ENCODE measurements at regions of chr15 and their contacts with region 1.

Region 1: DNA sequence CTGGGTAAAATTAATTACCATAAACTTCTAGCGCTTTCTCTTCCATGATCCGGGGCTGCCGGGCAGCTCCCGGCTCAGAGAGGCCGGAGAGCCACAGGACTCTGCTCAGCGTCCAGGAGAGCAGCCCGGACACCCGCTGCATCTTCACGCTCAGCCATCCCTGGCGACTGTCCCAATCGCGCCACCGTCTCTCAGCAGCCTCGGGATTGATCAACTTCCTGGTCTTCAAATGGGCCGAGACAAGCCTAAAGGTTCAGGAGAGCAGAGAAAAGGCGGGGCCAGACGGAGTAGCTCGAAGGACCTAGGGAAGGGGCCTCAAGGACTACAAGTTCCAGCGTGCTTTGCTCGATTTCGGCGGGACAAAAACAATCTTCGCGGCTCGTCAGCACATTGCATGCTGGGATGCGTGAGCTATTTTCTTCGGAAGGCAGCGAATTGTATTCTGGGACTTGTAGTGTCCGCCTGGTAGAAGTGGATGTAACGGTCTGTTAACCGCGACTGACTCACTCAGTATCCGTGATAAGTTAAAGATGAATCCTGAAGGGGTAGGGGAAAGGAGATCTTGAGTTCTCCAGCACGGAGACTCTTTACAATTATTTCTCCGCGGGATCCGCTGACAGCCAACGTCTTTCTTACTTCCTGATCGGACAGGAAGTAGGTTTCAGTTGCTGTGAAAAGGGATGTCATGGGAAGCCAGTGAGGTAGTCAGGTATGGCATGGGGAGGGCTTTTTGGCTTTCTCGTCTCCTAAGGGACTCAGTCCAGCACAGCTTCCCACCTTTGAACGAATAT is at the start of gene CIAO2A:
- DNase-seq: peak; percentile 66 to 93 (median 87)
- ATAC-seq: peak; percentile 80
- H3K4me3 ChIP-seq: peak within 1 kb of the TSS; percentile 87
- H3K4me3 Mint-ChIP-seq: peak within 1 kb of the TSS; percentile 92 to 100 (median 98)
- H3K27ac ChIP-seq: peak within 1 kb of the TSS; percentile 88
- H3K27ac Mint-ChIP-seq: peak within 1 kb of the TSS; percentile 98 to 100 (median 99)
- H3K4me1 ChIP-seq: peaks cover 41 to 48% of the 10 kb centered on the region in 2 donors
- H3K4me1 Mint-ChIP-seq: peaks cover 50 to 86% (median 81%) of the 10 kb centered on the region in 7 donors
- H3K27me3 ChIP-seq: no peaks in the 10 kb centered on the region
- H3K27me3 Mint-ChIP-seq: no peaks in the 10 kb centered on the region
- total RNA-seq, gene CIAO2A: 19.2 to 66.8 (median 28.0) TPM

Region 2: DNA sequence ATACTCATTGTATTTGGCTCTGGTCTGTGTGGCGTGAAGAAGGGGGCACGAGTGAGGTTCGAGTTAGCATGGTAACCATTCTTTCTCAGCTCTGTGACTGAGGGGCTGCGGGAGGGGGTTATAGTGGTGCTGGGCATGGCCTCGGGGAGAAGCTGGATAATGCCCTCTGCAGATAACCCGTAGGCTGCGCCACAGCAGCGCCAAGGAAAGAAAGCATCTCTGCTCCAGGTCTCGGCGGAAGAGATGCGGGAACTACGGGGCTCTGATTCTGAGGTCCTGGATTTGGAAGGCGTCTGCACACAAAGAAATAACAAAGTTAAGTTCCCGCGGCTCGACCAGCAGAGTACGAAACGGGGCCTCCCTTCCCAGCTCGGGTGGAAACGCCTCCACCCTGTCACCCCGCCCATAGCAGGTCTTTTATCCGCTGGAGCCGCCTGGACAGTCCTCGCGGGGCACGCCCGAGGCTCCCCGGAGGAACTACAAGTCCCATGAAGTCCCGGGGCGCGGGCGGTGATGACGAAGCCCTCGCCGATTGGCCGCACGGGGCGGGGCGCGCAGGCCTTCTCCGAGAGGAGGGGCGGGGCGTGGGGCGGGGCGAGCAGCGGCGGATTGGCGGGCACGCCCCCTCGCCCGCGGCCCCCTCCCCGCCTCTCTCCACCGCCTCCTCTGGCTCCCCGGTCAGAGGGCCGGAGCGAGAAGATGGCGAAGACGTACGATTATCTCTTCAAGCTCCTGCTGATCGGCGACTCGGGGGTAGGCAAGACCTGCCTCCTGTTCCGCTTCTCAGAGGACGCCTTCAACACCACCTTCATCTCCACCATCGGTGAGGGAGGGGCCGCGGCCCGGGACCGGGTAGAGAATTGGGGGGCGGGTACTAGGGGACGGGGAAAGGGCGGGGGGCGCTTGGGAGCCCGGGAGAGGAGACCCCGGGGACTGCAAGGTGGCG is 904.6 kb before region 1 on chr15 and contains the start of gene RAB8B:
- CTCF ChIA-PET with region 1: no interaction called
- POLR2A ChIA-PET with region 1: no interaction called
- intact Hi-C with region 1: loop called (anchors 1 to 2 kb)
- DNase-seq: peak; percentile 85 to 98 (median 93)
- ATAC-seq: peak; percentile 88
- H3K4me3 ChIP-seq: peak within 1 kb of the TSS; percentile 86
- H3K4me3 Mint-ChIP-seq: peak within 1 kb of the TSS; percentile 92 to 99 (median 97)
- H3K27ac ChIP-seq: peak within 1 kb of the TSS; percentile 99
- H3K27ac Mint-ChIP-seq: peak within 1 kb of the TSS; percentile 84 to 98 (median 95)
- H3K4me1 ChIP-seq: peaks cover 22 to 40% of the 10 kb centered on the region in 2 donors
- H3K4me1 Mint-ChIP-seq: peaks cover 41 to 54% (median 50%) of the 10 kb centered on the region in 7 donors
- H3K27me3 ChIP-seq: no peaks in the 10 kb centered on the region
- H3K27me3 Mint-ChIP-seq: peaks cover 0 to 3% (median 0%) of the 10 kb centered on the region in 5 donors
- total RNA-seq, gene RAB8B: 37.2 to 100 (median 71.3) TPM

Region 3: DNA sequence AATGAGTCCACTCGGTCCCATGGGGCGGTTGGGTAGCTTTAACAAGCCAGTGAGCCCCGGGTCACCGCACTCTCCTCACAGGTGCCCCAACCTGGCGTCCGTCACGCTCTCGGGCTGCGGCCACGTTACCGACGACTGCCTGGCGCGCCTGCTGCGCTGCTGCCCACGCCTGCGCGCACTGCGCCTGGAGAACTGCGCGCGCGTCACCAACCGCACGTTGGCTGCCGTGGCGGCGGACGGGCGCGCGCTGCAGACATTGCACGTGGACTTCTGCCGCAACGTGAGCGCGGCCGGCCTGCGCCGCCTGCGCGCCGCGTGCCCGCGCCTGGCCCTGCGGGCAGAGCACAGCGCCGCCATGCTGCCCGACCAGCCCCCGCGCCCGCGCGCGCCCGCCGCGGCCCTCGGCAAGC is 493.2 kb before region 1 on chr15:
- CTCF ChIA-PET with region 1: no interaction called
- POLR2A ChIA-PET with region 1: interaction called, 5 read pairs
- intact Hi-C with region 1: loop called (anchors 1 kb)
- DNase-seq: peak; percentile 85 to 95 (median 90)
- ATAC-seq: peak; percentile 93
- H3K4me3 ChIP-seq: peak overlapping the region; percentile 95
- H3K4me3 Mint-ChIP-seq: peak overlapping the region; percentile 91 to 99 (median 94)
- H3K27ac ChIP-seq: peak overlapping the region; percentile 80
- H3K27ac Mint-ChIP-seq: peak overlapping the region; percentile 90 to 96 (median 93)
- H3K4me1 ChIP-seq: peaks cover 22 to 27% of the 10 kb centered on the region in 2 donors
- H3K4me1 Mint-ChIP-seq: peaks cover 39 to 70% (median 66%) of the 10 kb centered on the region in 7 donors
- H3K27me3 ChIP-seq: no peaks in the 10 kb centered on the region
- H3K27me3 Mint-ChIP-seq: no peaks in the 10 kb centered on the region

Region 4: GRCh38 chr15:63891079-63891767 is 202.6 kb before region 1 on chr15:
- CTCF ChIA-PET with region 1: no interaction called
- POLR2A ChIA-PET with region 1: no interaction called
- intact Hi-C with region 1: loop called in 1 of 2 experiments (anchors 2 kb)
- DNase-seq: peak; percentile 33 to 77 (median 59)
- ATAC-seq: peak; percentile 60
- H3K4me3 ChIP-seq: no peak overlapping the region
- H3K4me3 Mint-ChIP-seq: peak overlapping the region in 9 of 10 donors; percentile 17 to 82 (median 51)
- H3K27ac ChIP-seq: peak overlapping the region; percentile 54
- H3K27ac Mint-ChIP-seq: peak overlapping the region; percentile 75 to 98 (median 88)
- H3K4me1 ChIP-seq: peaks cover 53% of the 10 kb centered on the region in 2 donors
- H3K4me1 Mint-ChIP-seq: peaks cover 57 to 81% (median 73%) of the 10 kb centered on the region in 7 donors
- H3K27me3 ChIP-seq: no peaks in the 10 kb centered on the region
- H3K27me3 Mint-ChIP-seq: no peaks in the 10 kb centered on the region

Region 5: GRCh38 chr15:64232400-64232799 is 138.6 kb after region 1 on chr15:
- CTCF ChIA-PET with region 1: no interaction called
- POLR2A ChIA-PET with region 1: no interaction called
- intact Hi-C with region 1: no loop called
- DNase-seq: no peak
- ATAC-seq: no peak
- H3K4me3 ChIP-seq: no peak overlapping the region
- H3K4me3 Mint-ChIP-seq: no peak overlapping the region
- H3K27ac ChIP-seq: no peak overlapping the region
- H3K27ac Mint-ChIP-seq: no peak overlapping the region
- H3K4me1 ChIP-seq: no peaks in the 10 kb centered on the region
- H3K4me1 Mint-ChIP-seq: peaks cover 5 to 24% (median 9%) of the 10 kb centered on the region in 7 donors
- H3K27me3 ChIP-seq: no peaks in the 10 kb centered on the region
- H3K27me3 Mint-ChIP-seq: no peaks in the 10 kb centered on the region

Region 6: DNA sequence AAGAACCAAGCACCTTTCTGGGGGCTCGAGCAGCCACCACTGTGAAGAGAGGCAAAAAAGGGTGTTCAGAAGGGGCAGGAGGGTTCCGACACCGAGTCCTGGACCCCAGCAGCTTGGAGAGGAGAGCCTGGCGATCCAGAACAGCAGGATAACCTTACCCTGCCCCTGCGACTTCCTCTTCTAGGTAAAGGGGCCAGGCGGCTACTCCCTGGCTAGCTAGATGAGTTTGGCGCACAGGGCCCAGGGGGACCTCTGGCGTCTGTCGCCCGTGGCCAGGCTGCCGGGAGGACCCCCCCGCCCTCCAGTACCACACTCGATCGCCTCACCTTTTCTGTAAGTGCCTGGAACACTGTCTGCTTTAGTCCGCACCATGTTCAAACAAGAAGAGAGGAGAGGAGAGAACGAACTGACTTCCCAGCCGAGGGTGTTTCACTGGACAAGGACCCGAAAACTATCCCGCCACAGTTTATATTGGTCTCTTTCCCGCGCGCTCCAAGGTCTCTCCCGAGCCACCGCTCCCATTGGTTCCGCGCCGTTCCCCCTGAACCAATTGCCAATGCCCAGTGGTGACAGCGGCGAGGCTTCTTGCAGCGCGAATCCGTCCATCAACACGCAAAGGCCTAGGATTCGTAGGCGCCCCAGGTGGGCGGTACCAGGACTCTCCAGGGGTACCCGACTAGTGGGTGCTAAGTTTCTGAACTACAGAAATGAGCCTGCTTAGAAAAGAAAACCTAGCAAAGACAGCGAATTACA is 287.4 kb after region 1 on chr15 and contains the start of gene PCLAF:
- CTCF ChIA-PET with region 1: no interaction called
- POLR2A ChIA-PET with region 1: no interaction called
- intact Hi-C with region 1: loop called (anchors 2 to 5 kb)
- DNase-seq: peak; percentile 72 to 91 (median 85)
- ATAC-seq: peak; percentile 100
- H3K4me3 ChIP-seq: peak within 1 kb of the TSS; percentile 66
- H3K4me3 Mint-ChIP-seq: peak within 1 kb of the TSS; percentile 79 to 97 (median 94)
- H3K27ac ChIP-seq: peak within 1 kb of the TSS; percentile 57
- H3K27ac Mint-ChIP-seq: peak within 1 kb of the TSS; percentile 11 to 88 (median 60)
- H3K4me1 ChIP-seq: peaks cover 0 to 4% of the 10 kb centered on the region in 2 donors
- H3K4me1 Mint-ChIP-seq: peaks cover 0 to 36% (median 9%) of the 10 kb centered on the region in 7 donors
- H3K27me3 ChIP-seq: no peaks in the 10 kb centered on the region
- H3K27me3 Mint-ChIP-seq: no peaks in the 10 kb centered on the region
- total RNA-seq, gene PCLAF: 0.85 to 58.7 (median 1.2) TPM

Region 7: DNA sequence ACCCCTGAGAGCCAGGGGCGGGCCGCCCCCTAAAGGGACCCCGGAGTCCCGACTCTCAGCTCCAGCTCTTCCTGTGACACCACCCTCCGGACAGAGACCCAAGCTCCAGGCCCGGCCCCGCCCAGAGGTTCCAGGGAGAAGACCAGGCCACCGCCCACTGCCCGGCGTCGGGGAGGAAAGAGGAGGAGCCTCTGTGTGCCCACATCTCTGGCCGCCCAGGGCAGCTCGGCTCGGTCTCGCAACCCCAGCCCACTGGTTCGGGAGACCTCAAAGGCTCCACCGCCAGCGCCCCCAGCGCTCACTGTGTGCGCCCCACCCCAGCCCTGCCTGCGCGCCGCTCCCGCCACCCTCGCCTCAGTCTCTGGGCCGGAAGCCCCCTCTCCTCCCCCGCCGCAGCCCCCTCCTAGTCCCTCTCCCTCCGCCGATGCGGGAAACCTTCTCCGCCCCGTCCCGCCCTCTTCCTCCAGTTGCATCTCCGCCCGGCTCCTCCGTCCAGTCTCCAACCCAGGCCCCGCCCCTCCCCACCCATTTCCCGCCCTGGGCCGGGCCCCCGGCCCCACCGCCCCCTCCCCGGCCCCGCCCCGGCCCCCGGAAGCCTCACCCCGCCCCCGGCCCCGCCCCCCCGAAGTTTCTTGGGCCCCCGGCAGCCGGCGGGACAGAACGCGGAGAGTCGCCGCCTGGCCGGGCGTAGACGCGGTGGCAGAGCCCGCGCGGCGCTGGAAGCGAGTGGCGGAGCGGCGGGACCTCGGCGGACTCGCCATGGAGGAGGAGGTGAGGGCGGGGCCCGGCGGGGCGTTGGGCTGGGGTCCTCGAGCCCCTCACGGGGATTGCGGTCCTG is 747.7 kb after region 1 on chr15 and contains the start of gene PLEKHO2:
- CTCF ChIA-PET with region 1: no interaction called
- POLR2A ChIA-PET with region 1: no interaction called
- intact Hi-C with region 1: loop called in 1 of 2 experiments (anchors 5 kb)
- DNase-seq: peak; percentile 70 to 88 (median 80)
- ATAC-seq: peak; percentile 85
- H3K4me3 ChIP-seq: peak within 1 kb of the TSS; percentile 65
- H3K4me3 Mint-ChIP-seq: peak within 1 kb of the TSS; percentile 85 to 98 (median 96)
- H3K27ac ChIP-seq: peak within 1 kb of the TSS; percentile 81
- H3K27ac Mint-ChIP-seq: peak within 1 kb of the TSS; percentile 83 to 96 (median 91)
- H3K4me1 ChIP-seq: peaks cover 48 to 62% of the 10 kb centered on the region in 2 donors
- H3K4me1 Mint-ChIP-seq: peaks cover 63 to 89% (median 86%) of the 10 kb centered on the region in 7 donors
- H3K27me3 ChIP-seq: no peaks in the 10 kb centered on the region
- H3K27me3 Mint-ChIP-seq: no peaks in the 10 kb centered on the region
- total RNA-seq, gene PLEKHO2: 8.6 to 52.3 (median 14.0) TPM

Region 8: DNA sequence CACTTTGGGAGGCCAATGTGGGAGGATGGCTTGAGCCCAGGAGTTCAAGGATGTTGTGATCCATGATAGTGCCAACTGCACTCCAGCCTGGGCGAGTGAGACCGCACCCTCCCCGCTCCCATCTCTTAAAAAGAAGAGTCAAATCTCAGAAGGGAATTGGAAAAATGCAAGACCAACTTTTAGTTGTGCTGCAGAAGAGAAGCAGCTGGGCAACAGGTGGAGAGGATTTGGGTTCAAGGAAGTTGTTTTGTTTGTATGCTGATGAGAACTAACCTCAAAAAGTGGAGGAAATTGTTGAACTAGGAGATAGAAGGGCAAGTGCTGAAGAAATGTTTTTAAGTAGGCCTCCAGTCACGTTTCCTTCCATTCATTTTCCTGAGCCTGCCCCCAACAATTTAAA is 1052.6 kb after region 1 on chr15:
- CTCF ChIA-PET with region 1: no interaction called
- POLR2A ChIA-PET with region 1: no interaction called
- intact Hi-C with region 1: no loop called
- DNase-seq: no peak
- ATAC-seq: no peak
- H3K4me3 ChIP-seq: no peak overlapping the region
- H3K4me3 Mint-ChIP-seq: no peak overlapping the region
- H3K27ac ChIP-seq: no peak overlapping the region
- H3K27ac Mint-ChIP-seq: peak overlapping the region in 4 of 9 donors; percentile 3 to 80 (median 36)
- H3K4me1 ChIP-seq: no peaks in the 10 kb centered on the region
- H3K4me1 Mint-ChIP-seq: peaks cover 0 to 4% (median 0%) of the 10 kb centered on the region in 7 donors
- H3K27me3 ChIP-seq: no peaks in the 10 kb centered on the region
- H3K27me3 Mint-ChIP-seq: no peaks in the 10 kb centered on the region

Region 9: DNA sequence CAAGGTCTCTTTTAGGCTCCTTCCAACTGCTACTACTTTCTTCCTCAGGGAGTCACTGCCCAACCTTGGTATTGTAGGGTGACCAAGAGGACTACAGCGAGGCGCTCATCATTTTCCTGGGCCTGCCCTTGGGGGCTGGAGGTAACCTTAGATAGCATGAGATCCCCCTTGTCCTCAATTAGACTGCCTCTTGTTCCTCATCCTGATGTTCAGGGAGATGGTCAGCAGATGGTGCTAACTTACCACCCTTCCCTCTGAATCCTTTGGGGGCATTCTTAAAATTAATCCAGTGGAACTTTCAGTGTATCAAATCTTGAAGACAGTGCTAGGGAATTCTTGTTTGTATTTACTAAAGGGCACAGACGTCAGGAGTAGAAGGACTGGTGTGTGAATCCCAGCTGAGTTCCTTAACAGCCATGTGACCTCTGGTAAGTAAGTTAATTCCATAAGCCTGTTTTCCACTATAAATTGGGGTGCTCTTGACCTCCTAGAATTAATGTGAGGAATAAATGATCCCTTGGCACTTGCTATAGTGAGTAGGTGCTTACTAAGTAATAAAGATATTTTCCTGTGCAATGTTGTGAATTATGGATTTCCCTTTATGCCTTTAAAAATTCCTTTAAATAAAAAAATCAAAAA is 1095.4 kb after region 1 on chr15:
- CTCF ChIA-PET with region 1: no interaction called
- POLR2A ChIA-PET with region 1: no interaction called
- intact Hi-C with region 1: no loop called
- DNase-seq: peak in 2 of 9 donors; percentile 10 to 11
- ATAC-seq: no peak
- H3K4me3 ChIP-seq: no peak overlapping the region
- H3K4me3 Mint-ChIP-seq: no peak overlapping the region
- H3K27ac ChIP-seq: no peak overlapping the region
- H3K27ac Mint-ChIP-seq: peak overlapping the region in 3 of 9 donors; percentile 2 to 59 (median 4)
- H3K4me1 ChIP-seq: peaks cover 0 to 4% of the 10 kb centered on the region in 2 donors
- H3K4me1 Mint-ChIP-seq: peaks cover 0 to 9% (median 6%) of the 10 kb centered on the region in 7 donors
- H3K27me3 ChIP-seq: no peaks in the 10 kb centered on the region
- H3K27me3 Mint-ChIP-seq: no peaks in the 10 kb centered on the region

Region 10: DNA sequence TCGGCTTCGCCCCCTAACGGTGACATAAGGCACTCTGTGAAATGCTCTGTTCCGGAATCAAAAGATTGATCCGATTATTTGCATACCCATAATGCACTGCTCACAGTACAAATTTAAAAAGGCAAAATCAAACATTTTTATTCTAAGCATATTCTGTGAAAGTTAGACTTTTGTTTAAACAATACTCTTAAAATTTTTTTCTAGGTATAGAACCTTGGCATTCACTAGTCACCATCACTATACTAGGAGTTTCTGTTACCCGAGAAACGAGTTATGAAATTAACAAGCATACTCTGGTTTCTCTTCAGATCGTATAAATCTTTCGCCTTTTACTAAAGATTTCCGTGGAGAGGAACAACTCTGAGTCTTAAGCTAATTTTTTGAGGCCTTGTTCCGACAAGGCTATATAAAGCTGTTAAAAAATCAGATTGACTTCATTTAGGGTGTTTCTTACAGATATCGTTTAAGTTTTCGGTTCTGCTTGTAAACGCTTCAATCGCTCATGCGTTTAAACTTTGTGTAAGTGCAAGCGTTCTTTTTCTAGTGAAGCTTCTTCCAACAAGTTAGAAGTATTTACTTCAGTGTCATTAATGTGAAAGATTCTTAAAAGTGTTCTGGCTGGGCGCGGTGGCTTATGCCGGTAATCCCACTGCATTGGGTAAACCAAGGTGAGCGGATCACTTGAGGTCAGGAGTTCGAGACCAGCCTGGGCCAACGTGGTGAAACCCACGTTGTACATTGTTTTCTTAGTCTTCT is 1210.7 kb after region 1 on chr15 and contains the start of gene RNU5B-1:
- CTCF ChIA-PET with region 1: no interaction called
- POLR2A ChIA-PET with region 1: no interaction called
- intact Hi-C with region 1: loop called (anchors 2 kb)
- DNase-seq: peak; percentile 40 to 94 (median 88)
- ATAC-seq: peak; percentile 89
- H3K4me3 ChIP-seq: peak within 1 kb of the TSS; percentile 60
- H3K4me3 Mint-ChIP-seq: peak within 1 kb of the TSS; percentile 91 to 99 (median 97)
- H3K27ac ChIP-seq: peak within 1 kb of the TSS; percentile 83
- H3K27ac Mint-ChIP-seq: peak within 1 kb of the TSS; percentile 96 to 100 (median 99)
- H3K4me1 ChIP-seq: peaks cover 0 to 9% of the 10 kb centered on the region in 2 donors
- H3K4me1 Mint-ChIP-seq: peaks cover 4 to 35% (median 31%) of the 10 kb centered on the region in 7 donors
- H3K27me3 ChIP-seq: no peaks in the 10 kb centered on the region
- H3K27me3 Mint-ChIP-seq: peaks cover 0 to 11% (median 0%) of the 10 kb centered on the region in 5 donors
- total RNA-seq, gene RNU5B-1: 18.9 TPM in 1 of 5 experiments, not detected in the others